CD4-positive, alpha-beta memory T cell (primary cell): ENCODE measurements at regions of chr2 and their contacts with region 1.

Region 1: GRCh38 chr2:143241403-143242088 is 112.3 kb downstream of the ARHGAP15 start:
- DNase-seq: no peak
- H3K4me3 ChIP-seq: no peak overlapping the region
- H3K4me3 Mint-ChIP-seq: peak overlapping the region in 1 of 8 donors; percentile 33
- H3K27ac ChIP-seq: no peak overlapping the region
- H3K27ac Mint-ChIP-seq: peak overlapping the region in 5 of 7 donors; percentile 43 to 79 (median 70)
- H3K4me1 ChIP-seq: peaks cover 49% of the 10 kb centered on the region
- H3K4me1 Mint-ChIP-seq: peaks cover 22 to 38% (median 31%) of the 10 kb centered on the region in 4 donors
- H3K27me3 ChIP-seq: no peaks in the 10 kb centered on the region
- H3K27me3 Mint-ChIP-seq: no peaks in the 10 kb centered on the region

Region 2: GRCh38 chr2:143254110-143254509 is 12.6 kb after region 1 on chr2:
- CTCF ChIA-PET with region 1: interaction called, 37 read pairs
- POLR2A ChIA-PET with region 1: interaction called, 80 read pairs
- intact Hi-C with region 1: no loop called
- DNase-seq: peak in 3 of 5 donors; percentile 28 to 65 (median 32)
- H3K4me3 ChIP-seq: peak overlapping the region in 1 of 2 donors; percentile 10
- H3K4me3 Mint-ChIP-seq: peak overlapping the region; percentile 49 to 89 (median 74)
- H3K27ac ChIP-seq: peak overlapping the region; percentile 79
- H3K27ac Mint-ChIP-seq: peak overlapping the region; percentile 84 to 99 (median 92)
- H3K4me1 ChIP-seq: peaks cover 89% of the 10 kb centered on the region
- H3K4me1 Mint-ChIP-seq: peaks cover 56 to 73% (median 65%) of the 10 kb centered on the region in 4 donors
- H3K27me3 ChIP-seq: no peaks in the 10 kb centered on the region
- H3K27me3 Mint-ChIP-seq: no peaks in the 10 kb centered on the region